SK-N-SH (cell line): ENCODE measurements at regions of chr12 and their contacts with region 1.

Region 1: DNA sequence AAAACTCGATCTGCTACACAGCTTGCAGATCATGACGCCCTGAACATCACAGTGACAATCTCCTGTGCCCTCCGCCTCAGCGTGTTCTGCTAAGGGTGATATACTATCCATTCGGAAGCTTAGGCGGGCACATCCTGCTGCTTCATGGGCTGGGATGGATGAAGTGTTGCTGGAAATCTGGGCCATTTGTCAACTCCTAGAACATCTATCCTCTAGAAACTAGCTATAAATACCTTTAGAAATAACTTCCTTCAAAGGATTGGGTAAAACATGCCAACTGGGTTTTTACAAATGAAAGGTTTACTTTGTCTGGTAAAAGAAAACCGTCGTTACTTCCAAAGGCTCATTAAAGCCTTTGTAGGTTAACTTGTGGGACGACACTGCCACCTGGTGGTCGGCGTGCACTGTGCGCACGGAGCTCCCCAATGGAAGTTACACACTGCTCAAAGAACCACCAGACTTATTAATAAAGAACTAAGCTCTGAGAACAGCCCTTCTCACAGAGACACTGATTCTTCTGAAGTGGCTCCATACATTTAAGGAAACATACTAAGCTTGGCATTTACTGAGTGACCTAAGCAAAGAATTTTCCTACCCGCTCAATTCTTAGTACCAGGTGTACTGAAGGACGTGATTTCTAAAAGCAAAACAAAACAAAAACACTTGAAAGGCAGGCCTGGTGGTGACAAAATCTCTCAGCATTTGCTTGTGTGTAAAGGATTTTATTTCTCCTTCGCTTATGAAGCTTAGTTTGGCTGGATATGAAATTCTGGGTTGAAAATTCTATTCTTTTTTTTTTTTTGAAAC is 21.6 kb upstream of the CACNA2D4 start:
- DNase-seq: peak; percentile 81
- H3K4me3 ChIP-seq: no peak overlapping the region; a peak in 1 of 4 replicates
- H3K27ac ChIP-seq: peak overlapping the region in 1 of 2 experiments; percentile 50; a peak in 1 of 4 replicates
- H3K4me1 ChIP-seq: peaks cover 0 to 31% of the 10 kb centered on the region in 2 experiments; a peak in 2 of 4 replicates
- H3K27me3 ChIP-seq: no peaks in the 10 kb centered on the region
- CTCF ChIP-seq: peak; percentile 98
- EP300 ChIP-seq: no peak
- RAD21 ChIP-seq: peak; percentile 98

Region 2: GRCh38 chr12:1650260-1650977 is 289.6 kb before region 1 on chr12:
- CTCF ChIA-PET with region 1: interaction called, 140 read pairs
- POLR2A ChIA-PET with region 1: no interaction called
- DNase-seq: no peak
- H3K4me3 ChIP-seq: no peak overlapping the region
- H3K27ac ChIP-seq: no peak overlapping the region
- H3K4me1 ChIP-seq: peaks cover 0 to 11% of the 10 kb centered on the region in 2 experiments; a peak in 1 of 4 replicates
- H3K27me3 ChIP-seq: no peaks in the 10 kb centered on the region
- CTCF ChIP-seq: no peak
- EP300 ChIP-seq: no peak
- RAD21 ChIP-seq: no peak

Region 3: DNA sequence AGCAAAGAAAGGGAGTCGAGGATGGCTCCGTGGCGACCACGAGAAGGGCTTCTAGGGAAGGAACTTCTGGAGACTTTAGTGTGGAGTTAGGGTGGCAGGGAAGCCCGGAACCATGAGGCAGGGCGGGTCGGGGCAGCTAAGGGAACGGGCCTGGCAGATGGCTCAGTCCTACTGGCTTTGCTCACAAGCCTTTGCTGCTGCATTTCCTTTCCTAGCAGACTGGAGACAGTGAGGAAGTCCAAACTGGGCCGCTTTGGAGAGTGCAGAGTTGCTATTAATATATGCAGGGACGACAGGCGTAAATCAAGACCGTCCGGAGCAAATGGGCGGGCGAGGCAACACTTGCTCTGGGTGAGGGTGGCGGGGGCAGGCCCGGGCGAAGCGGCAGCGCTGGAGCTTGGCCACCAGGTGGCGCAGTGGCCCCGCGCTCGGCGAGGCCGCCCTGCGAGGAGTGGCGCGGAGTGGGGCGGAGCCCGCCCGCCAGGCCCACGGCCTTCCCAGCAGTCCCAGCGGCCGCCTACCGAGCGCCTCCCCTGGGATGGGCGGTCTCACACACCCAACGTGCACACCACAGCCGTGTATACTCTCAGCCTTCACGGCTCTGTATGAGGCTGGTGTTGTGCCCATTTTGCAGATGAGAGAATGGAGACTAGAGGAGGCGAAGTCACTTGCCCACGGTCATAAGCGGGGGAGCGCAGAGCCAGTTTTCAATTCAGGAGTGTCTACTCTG is 144.1 kb before region 1 on chr12:
- CTCF ChIA-PET with region 1: interaction called, 349 read pairs
- POLR2A ChIA-PET with region 1: interaction called, 9 read pairs
- DNase-seq: peak; percentile 98
- H3K4me3 ChIP-seq: no peak overlapping the region
- H3K27ac ChIP-seq: peak overlapping the region in 1 of 2 experiments; percentile 34; a peak in 1 of 4 replicates
- H3K4me1 ChIP-seq: peaks cover 0 to 29% of the 10 kb centered on the region in 2 experiments; a peak in 1 of 4 replicates
- H3K27me3 ChIP-seq: no peaks in the 10 kb centered on the region
- CTCF ChIP-seq: peak; percentile 88
- EP300 ChIP-seq: no peak
- RAD21 ChIP-seq: peak; percentile 98

Region 4: DNA sequence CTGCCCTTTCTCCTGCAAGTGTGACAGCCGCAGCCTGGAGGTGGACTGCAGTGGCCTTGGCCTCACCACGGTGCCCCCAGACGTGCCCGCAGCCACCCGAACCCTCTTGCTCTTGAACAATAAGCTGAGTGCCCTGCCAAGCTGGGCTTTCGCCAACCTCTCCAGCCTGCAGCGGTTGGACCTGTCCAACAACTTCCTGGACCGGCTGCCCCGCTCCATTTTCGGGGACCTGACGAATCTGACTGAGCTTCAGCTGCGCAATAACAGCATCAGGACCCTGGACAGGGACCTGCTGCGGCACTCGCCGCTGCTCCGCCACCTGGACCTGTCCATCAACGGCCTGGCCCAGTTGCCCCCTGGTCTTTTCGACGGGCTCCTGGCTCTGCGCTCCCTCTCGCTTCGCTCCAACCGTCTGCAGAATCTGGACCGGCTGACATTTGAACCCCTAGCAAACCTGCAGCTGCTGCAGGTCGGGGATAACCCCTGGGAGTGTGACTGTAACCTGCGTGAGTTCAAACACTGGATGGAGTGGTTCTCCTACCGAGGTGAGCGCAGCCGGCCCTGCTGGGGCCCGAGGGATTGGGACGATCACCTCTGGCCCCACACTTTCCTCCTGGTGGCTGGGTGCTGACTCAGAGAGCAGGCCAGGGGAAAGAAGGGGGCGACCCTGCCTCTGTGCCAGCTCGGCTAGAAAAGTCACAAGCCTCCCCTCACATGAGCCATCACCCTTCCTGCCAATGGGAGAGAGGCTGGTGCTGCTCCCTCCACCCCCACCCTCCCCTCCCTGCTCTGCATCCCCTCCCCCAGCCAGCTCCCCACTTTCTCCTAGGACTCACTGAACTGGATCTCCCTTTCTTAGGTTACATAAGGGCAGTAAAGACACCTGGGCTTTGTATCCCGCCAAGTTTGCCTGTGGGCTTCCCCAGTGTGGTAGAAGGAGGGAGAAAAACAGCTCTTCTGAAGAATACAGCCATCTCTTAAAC is 108.7 kb before region 1 on chr12:
- CTCF ChIA-PET with region 1: interaction called, 35 read pairs
- POLR2A ChIA-PET with region 1: interaction called, 3 read pairs
- DNase-seq: peak; percentile 38
- H3K4me3 ChIP-seq: no peak overlapping the region
- H3K27ac ChIP-seq: peak overlapping the region in 1 of 2 experiments; percentile 85; a peak in 2 of 4 replicates
- H3K4me1 ChIP-seq: peaks cover 0 to 72% of the 10 kb centered on the region in 2 experiments; a peak in 2 of 4 replicates
- H3K27me3 ChIP-seq: no peaks in the 10 kb centered on the region
- CTCF ChIP-seq: no peak
- EP300 ChIP-seq: no peak
- RAD21 ChIP-seq: no peak

Region 5: DNA sequence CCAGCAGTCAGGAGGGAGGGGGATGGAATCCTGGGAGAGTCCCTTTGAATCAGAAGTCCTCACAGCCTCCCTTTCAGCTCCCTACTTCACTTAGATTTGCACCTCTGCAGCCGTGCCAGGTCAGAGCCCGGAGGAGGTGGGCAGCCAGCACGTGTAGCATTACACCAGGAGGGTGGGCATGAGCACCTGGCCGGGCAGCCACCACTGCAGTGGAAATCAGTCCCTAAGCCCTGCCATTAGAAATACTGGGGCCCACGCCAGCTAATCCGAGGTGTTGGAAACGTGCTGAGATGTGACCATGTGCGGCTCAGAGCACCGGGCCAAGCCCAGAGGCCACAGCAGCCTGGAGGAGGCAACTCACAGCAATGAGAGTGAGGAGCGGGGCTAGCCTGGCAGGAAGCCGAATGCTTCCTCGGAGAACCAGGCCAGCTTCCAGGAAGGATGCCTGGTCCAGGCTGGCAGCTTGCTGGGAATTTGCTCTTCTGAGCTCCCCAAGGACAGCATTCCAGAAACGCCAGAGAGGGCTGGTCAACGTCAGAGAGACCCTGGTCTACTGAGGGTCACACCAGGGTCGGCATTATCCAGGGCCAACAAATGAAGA is 12.2 kb before region 1 on chr12:
- CTCF ChIA-PET with region 1: interaction called, 18 read pairs
- POLR2A ChIA-PET with region 1: no interaction called
- DNase-seq: peak; percentile 23
- H3K4me3 ChIP-seq: no peak overlapping the region
- H3K27ac ChIP-seq: no peak overlapping the region; a peak in 1 of 4 replicates
- H3K4me1 ChIP-seq: peaks cover 4 to 56% of the 10 kb centered on the region in 2 experiments; a peak in 2 of 4 replicates
- H3K27me3 ChIP-seq: no peaks in the 10 kb centered on the region; the same call in 1 of the 2 replicates
- CTCF ChIP-seq: no peak
- EP300 ChIP-seq: no peak
- RAD21 ChIP-seq: no peak

Region 6: DNA sequence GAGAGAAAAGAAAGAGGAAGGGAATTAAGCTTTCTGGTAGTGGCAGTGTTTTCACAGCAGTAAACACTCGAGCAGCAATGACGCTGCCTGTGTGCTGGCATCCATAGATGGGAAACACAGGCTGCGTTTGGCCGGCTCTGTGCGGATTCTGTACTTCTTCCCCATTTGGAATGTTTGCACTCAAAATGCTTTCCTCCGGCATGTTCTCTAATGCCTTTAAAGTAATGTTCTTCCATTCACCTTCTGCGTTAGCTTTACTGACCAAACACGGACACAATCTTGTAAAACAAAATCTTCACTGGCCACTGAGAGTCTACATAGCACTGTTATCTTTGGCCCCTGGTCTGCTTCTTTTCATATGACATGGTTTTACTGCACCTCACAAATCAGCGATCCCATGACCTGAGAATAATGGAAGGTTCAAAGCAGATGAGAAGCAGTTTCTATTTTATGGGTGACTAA is 32.9 kb after region 1 on chr12:
- CTCF ChIA-PET with region 1: interaction called, 18 read pairs
- POLR2A ChIA-PET with region 1: no interaction called
- DNase-seq: no peak
- H3K4me3 ChIP-seq: no peak overlapping the region
- H3K27ac ChIP-seq: peak overlapping the region in 1 of 2 experiments; percentile 39; a peak in 1 of 4 replicates
- H3K4me1 ChIP-seq: peaks cover 3 to 8% of the 10 kb centered on the region in 2 experiments; a peak in 3 of 4 replicates
- H3K27me3 ChIP-seq: no peaks in the 10 kb centered on the region
- CTCF ChIP-seq: no peak
- EP300 ChIP-seq: no peak
- RAD21 ChIP-seq: no peak

Region 7: GRCh38 chr12:2051700-2052621 is 112.0 kb after region 1 on chr12:
- CTCF ChIA-PET with region 1: interaction called, 10 read pairs
- POLR2A ChIA-PET with region 1: no interaction called
- DNase-seq: peak; percentile 59
- H3K4me3 ChIP-seq: peak overlapping the region; percentile 52 to 82
- H3K27ac ChIP-seq: peak overlapping the region in 1 of 2 experiments; percentile 55; a peak in 1 of 4 replicates
- H3K4me1 ChIP-seq: peaks cover 0 to 31% of the 10 kb centered on the region in 2 experiments; a peak in 1 of 4 replicates
- H3K27me3 ChIP-seq: no peaks in the 10 kb centered on the region; the same call in 1 of the 2 replicates
- CTCF ChIP-seq: peak; percentile 22; the same call in 1 of the 2 replicates
- EP300 ChIP-seq: no peak
- RAD21 ChIP-seq: peak; percentile 51